ENCODE measurements at regions of chr15 and their contacts with region 1.

Region 1: DNA sequence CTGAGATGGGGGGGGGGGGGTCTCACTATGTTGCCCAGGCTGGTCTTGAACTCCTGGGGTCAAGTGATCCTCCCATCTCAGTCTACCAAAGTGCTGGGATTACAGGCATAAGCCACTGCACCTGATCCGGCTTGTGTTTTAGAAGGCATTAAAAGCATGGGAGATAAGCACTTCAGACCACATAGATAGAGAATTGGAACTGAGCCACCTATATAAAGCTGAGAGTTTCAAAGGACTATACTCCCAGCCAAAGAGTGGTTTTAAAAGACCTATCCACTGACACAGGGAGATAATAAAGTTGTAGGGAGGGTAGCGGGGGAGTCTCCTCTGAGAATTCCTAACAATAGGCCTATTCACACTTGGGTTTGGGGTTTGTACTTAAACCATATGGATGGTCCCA is 34.8 kb downstream of the DENND4A start:
- H3K4me3 ChIP-seq: no peak overlapping the region
- H3K27ac ChIP-seq: 0 out of 2 replicates have a peak overlapping the region, but pooled peaks have one; percentile 16
- H3K4me1 ChIP-seq: peaks cover 14% of the 10 kb centered on the region
- CTCF ChIP-seq: no peak

Region 2: GRCh38 chr15:65619626-65620290 is 137.5 kb before region 1 on chr15:
- CTCF ChIA-PET with region 1: interaction called, 10 read pairs
- POLR2A ChIA-PET with region 1: no interaction called
- H3K4me3 ChIP-seq: no peak overlapping the region
- H3K27ac ChIP-seq: no peak overlapping the region
- H3K4me1 ChIP-seq: no peaks in the 10 kb centered on the region
- CTCF ChIP-seq: no peak

Region 3: GRCh38 chr15:65638681-65639089 is 118.6 kb before region 1 on chr15:
- CTCF ChIA-PET with region 1: no interaction called
- POLR2A ChIA-PET with region 1: no interaction called
- H3K4me3 ChIP-seq: no peak overlapping the region
- H3K27ac ChIP-seq: no peak overlapping the region
- H3K4me1 ChIP-seq: peaks cover 2% of the 10 kb centered on the region; the same call in 1 of the 2 replicates
- CTCF ChIP-seq: peak; percentile 79

Region 4: DNA sequence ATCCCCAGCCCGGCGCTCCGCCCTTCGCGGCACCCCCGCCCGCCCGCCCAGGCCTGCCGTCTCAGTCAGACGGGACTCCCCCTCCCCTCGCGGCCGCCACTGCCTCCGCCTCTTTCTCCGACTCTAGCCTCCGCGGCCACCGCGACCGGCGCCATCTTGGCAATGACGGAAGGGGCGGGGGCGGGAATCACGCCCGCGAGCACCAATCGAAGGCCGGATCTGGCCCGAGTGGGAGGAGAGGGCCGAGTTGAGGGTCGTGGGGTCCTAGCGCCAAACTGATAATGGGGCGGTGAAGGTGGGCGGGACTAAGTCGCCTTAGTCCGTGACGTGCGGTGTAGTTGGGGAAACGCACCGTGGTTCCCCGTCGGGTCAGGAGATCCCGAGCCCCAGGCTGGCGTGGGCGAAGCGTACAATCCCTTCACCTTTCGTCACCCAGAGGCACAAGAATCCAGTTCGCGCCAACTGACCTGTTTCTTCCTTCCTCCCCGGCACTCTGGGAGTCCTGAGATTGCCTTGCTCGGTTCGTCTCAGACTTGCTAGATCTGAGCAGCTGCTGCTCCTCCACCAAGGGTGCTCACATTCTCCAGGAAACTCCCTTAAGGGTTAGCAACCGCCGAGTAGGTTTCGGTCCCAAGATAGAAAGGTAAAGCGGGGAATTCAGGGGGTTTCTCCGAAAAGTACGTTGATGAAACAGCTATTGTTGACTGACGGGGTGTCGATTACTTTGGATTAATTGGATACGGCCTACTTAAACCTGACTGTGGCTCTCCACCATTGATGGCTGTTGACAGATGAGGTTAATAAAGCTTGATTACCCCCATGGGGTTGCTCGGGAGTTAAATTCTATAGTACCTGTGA is 35.1 kb after region 1 on chr15 and contains the start of gene DENND4A:
- CTCF ChIA-PET with region 1: no interaction called
- POLR2A ChIA-PET with region 1: no interaction called
- H3K4me3 ChIP-seq: peak within 1 kb of the TSS; percentile 70
- H3K27ac ChIP-seq: peak within 1 kb of the TSS; percentile 81
- H3K4me1 ChIP-seq: peaks cover 17% of the 10 kb centered on the region
- CTCF ChIP-seq: no peak

Measured in HEK293 (cell line).